ENCODE measurements at regions of chr11 and their contacts with region 1.

Region 1: DNA sequence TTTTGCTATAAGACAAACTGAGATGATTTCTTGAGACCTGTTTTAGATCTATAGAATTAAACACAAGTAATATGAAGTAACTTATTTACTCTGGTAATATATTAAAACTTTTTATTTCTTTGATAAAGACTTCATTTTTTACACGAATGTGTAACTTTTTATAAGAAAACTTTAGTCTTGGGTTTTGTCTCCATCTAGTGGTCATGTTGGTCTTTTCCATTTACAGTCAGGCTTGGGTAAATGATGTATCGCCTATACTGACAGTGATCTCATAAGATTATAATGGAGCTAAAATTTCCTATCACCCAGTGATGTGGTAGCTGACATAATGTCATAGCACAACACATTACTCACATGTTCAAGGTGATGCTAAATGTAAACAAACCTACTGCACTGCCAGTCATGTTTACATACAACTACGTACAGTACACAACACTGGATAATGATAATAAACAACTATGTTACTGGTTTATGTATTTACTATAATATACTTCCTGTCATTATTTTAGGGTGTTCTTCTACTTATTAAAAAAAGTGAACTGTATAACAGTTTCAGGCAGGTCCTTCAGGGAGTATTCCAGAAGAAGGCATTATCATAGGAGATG is 7.5 kb upstream of the C11orf97 start:
- DNase-seq: no peak
- H3K4me3 ChIP-seq: no peak overlapping the region
- H3K27ac ChIP-seq: no peak overlapping the region
- H3K4me1 ChIP-seq: no peaks in the 10 kb centered on the region
- H3K27me3 ChIP-seq: no peaks in the 10 kb centered on the region
- CTCF ChIP-seq: peak; percentile 50 to 84 (median 74)
- POLR2A ChIP-seq: no peak

Region 2: GRCh38 chr11:93895106-93895862 is 609.5 kb before region 1 on chr11:
- intact Hi-C with region 1: loop called (anchors 10 kb)
- DNase-seq: no peak
- H3K4me3 ChIP-seq: no peak overlapping the region
- H3K27ac ChIP-seq: no peak overlapping the region
- H3K4me1 ChIP-seq: no peaks in the 10 kb centered on the region
- H3K27me3 ChIP-seq: peaks cover 0 to 31% (median 3%) of the 10 kb centered on the region in 7 donors
- CTCF ChIP-seq: peak in 6 of 11 experiments; percentile 6 to 48 (median 41)
- POLR2A ChIP-seq: no peak

Region 3: GRCh38 chr11:94325681-94326080 is 179.1 kb before region 1 on chr11:
- intact Hi-C with region 1: loop called (anchors 10 kb)
- DNase-seq: no peak
- H3K4me3 ChIP-seq: no peak overlapping the region
- H3K27ac ChIP-seq: no peak overlapping the region
- H3K4me1 ChIP-seq: no peaks in the 10 kb centered on the region
- H3K27me3 ChIP-seq: no peaks in the 10 kb centered on the region
- CTCF ChIP-seq: peak in 7 of 11 experiments; percentile 16 to 59 (median 39)
- POLR2A ChIP-seq: no peak

Region 4: GRCh38 chr11:94336033-94336432 is 168.8 kb before region 1 on chr11:
- intact Hi-C with region 1: no loop called
- DNase-seq: no peak
- H3K4me3 ChIP-seq: no peak overlapping the region
- H3K27ac ChIP-seq: no peak overlapping the region
- H3K4me1 ChIP-seq: no peaks in the 10 kb centered on the region
- H3K27me3 ChIP-seq: peaks cover 0 to 7% (median 0%) of the 10 kb centered on the region in 7 donors
- CTCF ChIP-seq: no peak
- POLR2A ChIP-seq: no peak

Region 5: GRCh38 chr11:94472916-94473799 is 31.6 kb before region 1 on chr11:
- intact Hi-C with region 1: no loop called
- DNase-seq: no peak
- H3K4me3 ChIP-seq: no peak overlapping the region
- H3K27ac ChIP-seq: peak overlapping the region in 3 of 8 donors; percentile 46 to 51 (median 50)
- H3K4me1 ChIP-seq: peaks cover 0 to 14% (median 3%) of the 10 kb centered on the region in 6 donors
- H3K27me3 ChIP-seq: no peaks in the 10 kb centered on the region
- CTCF ChIP-seq: no peak
- POLR2A ChIP-seq: no peak

Measured in spleen (tissue), 13 donors.